ENCODE measurements at regions of chr15 and their contacts with region 1.

Region 1: DNA sequence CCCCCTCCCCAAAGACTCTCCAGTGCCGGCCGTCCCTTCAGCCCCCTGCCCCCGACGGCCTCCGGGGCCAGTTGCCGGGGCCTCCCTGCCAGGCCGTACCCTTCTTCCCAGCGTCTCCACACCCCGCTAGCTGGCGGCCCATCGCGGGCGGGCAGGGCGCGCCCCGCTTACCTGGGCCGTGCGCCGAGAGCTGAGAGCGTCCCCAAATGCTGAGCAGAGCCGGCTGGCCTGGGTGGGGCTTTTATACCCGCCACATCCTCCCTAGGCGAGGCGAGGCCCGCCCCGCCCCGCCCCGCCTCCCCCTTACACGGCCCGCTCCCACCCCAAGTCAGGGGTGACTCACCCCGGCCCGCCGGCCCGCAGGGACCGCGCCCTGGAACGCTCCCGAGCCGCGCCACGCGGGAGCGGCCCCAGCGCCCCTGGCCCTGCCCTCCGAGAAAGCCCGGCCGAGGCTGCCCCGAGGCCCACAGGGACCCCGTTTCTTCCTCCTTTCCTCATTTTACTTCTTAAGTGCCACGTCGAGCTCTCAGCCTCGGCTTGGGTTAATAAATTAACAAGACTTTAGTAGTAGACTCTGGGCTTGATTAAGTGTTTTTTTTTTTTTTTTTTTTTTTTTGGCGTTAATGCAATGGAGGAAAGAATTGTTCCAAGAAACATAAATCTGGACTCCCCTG is at the start of gene ANXA2:
- DNase-seq: peak; percentile 89 to 90
- H3K4me3 ChIP-seq: peak within 1 kb of the TSS; percentile 99
- H3K4me3 Mint-ChIP-seq: peak within 1 kb of the TSS; percentile 78
- H3K27ac Mint-ChIP-seq: peak within 1 kb of the TSS; percentile 98
- H3K4me1 ChIP-seq: peaks cover 59% of the 10 kb centered on the region
- H3K4me1 Mint-ChIP-seq: peaks cover 62% of the 10 kb centered on the region
- H3K27me3 ChIP-seq: no peaks in the 10 kb centered on the region
- H3K27me3 Mint-ChIP-seq: no peaks in the 10 kb centered on the region
- CTCF ChIP-seq: no peak
- total RNA-seq, gene ANXA2: 1,141 and 1,158 TPM in 2 replicates

Region 2: DNA sequence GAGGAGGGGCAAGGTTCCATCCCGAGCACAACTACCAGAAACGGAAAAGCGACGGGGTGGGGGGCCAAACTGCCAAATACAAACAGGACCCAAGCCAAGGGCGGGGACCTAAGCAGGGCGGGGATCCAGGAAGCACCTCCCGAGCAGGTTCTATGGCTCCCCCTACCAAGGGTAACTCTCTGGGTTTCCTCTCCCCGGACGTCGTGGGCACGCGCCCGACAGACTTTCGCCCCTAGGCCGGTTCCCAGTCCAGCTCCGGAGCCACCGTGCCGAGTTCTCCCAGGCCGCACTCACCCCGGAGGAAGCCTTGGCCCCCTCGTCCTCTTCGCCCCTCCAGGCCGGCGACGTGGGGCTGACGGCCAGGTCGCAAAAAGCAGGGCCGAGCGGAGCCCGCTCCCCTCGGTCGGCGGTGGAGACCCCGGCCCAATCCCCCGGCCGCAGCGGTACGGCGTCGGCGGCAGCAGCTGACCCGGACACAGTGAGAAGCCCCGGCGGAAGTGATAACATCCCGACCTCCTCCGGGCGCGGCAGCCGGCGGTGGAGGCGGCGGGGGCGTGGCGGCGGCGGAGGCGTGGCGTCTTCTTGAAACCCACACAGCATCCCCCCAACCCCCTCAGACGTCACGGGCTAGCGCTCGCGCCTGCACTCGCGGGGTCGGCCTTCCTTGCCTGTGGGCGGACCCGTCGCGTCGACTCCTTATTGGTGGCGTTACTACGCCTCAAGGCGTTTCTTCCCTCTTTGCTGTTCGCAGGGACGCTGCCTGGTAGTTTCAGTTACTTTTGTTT is 708.9 kb before region 1 on chr15 and contains the start of gene BNIP2:
- CTCF ChIA-PET with region 1: no interaction called
- POLR2A ChIA-PET with region 1: no interaction called
- intact Hi-C with region 1: loop called (anchors 5 kb)
- DNase-seq: peak; percentile 98 to 99
- H3K4me3 ChIP-seq: peak within 1 kb of the TSS; percentile 99
- H3K4me3 Mint-ChIP-seq: peak within 1 kb of the TSS; percentile 87
- H3K27ac Mint-ChIP-seq: peak within 1 kb of the TSS; percentile 90
- H3K4me1 ChIP-seq: 0 out of 2 replicates have a peak, but pooled peaks cover 4% of the 10 kb centered on the region
- H3K4me1 Mint-ChIP-seq: peaks cover 14% of the 10 kb centered on the region
- H3K27me3 ChIP-seq: no peaks in the 10 kb centered on the region
- H3K27me3 Mint-ChIP-seq: no peaks in the 10 kb centered on the region
- CTCF ChIP-seq: no peak
- total RNA-seq, gene BNIP2: 54.0 and 56.0 TPM in 2 replicates

Region 3: DNA sequence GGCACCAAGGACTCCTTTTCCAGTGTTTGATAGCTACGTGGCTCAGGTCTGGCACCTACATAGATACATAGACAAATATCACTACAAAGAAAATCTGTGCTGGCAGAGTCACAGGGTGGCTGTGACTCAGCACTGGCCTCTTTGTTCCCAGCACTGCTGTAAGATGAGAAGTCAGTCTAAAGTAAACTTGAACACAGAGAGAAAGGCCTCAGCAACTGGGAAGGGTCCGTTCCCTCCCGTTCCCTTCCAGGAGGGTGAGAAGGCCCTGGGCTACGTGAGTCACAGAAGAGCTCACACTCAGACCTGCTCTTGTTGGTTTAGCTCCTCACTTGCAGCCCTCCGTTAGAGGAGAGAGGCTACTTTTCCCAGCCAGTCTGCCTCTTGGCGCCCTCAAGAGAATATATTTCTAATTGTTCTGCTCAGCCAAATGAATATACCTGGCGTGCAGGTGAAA is 23.3 kb before region 1 on chr15:
- CTCF ChIA-PET with region 1: no interaction called
- POLR2A ChIA-PET with region 1: interaction called, 9 read pairs
- intact Hi-C with region 1: loop called (anchors 1 kb)
- DNase-seq: peak; percentile 74 to 77
- H3K4me3 ChIP-seq: no peak overlapping the region
- H3K4me3 Mint-ChIP-seq: no peak overlapping the region
- H3K27ac Mint-ChIP-seq: peak overlapping the region; percentile 81
- H3K4me1 ChIP-seq: peaks cover 62% of the 10 kb centered on the region
- H3K4me1 Mint-ChIP-seq: peaks cover 46% of the 10 kb centered on the region
- H3K27me3 ChIP-seq: no peaks in the 10 kb centered on the region
- H3K27me3 Mint-ChIP-seq: no peaks in the 10 kb centered on the region
- CTCF ChIP-seq: no peak

Region 4: DNA sequence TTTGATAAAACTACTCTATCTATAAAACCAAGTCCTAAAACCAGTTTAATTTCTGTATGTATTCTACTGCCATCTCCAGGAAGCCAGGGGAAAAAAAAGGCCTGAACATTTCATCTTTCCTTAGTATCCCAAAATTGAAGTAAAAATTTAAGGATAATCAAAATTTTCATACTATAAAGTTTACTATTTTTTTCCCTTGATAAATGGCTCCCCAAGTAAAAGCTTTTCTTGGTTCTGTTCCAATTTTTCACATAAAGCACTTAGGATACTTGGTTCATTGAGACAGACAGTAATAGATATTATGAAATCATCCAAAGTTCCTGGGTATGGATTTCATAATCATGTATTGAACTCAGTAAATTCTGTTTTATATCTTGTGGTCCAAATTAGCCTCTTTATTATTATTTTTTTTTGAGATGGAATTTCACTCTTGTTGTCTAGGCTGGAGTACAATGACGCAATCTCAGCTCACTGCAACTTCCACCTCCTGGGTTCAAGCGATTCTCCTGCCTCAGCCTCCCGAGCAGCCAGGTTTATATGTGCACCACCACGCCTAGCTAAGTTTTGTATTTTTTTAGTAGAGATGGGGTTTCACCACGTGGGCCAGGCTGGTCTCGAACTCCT is 46.5 kb after region 1 on chr15:
- CTCF ChIA-PET with region 1: no interaction called
- POLR2A ChIA-PET with region 1: interaction called, 3 read pairs
- intact Hi-C with region 1: loop called (anchors 5 kb)
- DNase-seq: no peak
- H3K4me3 ChIP-seq: no peak overlapping the region
- H3K4me3 Mint-ChIP-seq: no peak overlapping the region
- H3K27ac Mint-ChIP-seq: no peak overlapping the region
- H3K4me1 ChIP-seq: no peaks in the 10 kb centered on the region
- H3K4me1 Mint-ChIP-seq: peaks cover 16% of the 10 kb centered on the region
- H3K27me3 ChIP-seq: no peaks in the 10 kb centered on the region
- H3K27me3 Mint-ChIP-seq: no peaks in the 10 kb centered on the region
- CTCF ChIP-seq: peak; percentile 32 to 54

Region 5: GRCh38 chr15:60478566-60479360 is 80.9 kb after region 1 on chr15 and contains the start of gene ICE2:
- CTCF ChIA-PET with region 1: no interaction called
- POLR2A ChIA-PET with region 1: no interaction called
- intact Hi-C with region 1: loop called (anchors 2 kb)
- DNase-seq: peak; percentile 94 to 95
- H3K4me3 ChIP-seq: peak within 1 kb of the TSS; percentile 65
- H3K4me3 Mint-ChIP-seq: peak within 1 kb of the TSS; percentile 82
- H3K27ac Mint-ChIP-seq: peak within 1 kb of the TSS; percentile 98
- H3K4me1 ChIP-seq: peaks cover 16% of the 10 kb centered on the region
- H3K4me1 Mint-ChIP-seq: peaks cover 22% of the 10 kb centered on the region
- H3K27me3 ChIP-seq: no peaks in the 10 kb centered on the region
- H3K27me3 Mint-ChIP-seq: no peaks in the 10 kb centered on the region
- CTCF ChIP-seq: peak in 1 of 2 experiments; percentile 14
- total RNA-seq, gene ICE2: 42.3 and 44.5 TPM in 2 replicates

Measured in Caco-2 (cell line).